Colonic mucosa (tissue), 4 donors: ENCODE measurements at regions of chr9 and their contacts with region 1.

Region 1: GRCh38 chr9:121322037-121322775 is 47.8 kb downstream of the STOM start:
- DNase-seq: no peak
- H3K4me3 ChIP-seq: no peak overlapping the region
- H3K27ac ChIP-seq: peak overlapping the region; percentile 53
- H3K4me1 ChIP-seq: no peaks in the 10 kb centered on the region
- H3K27me3 ChIP-seq: no peaks in the 10 kb centered on the region
- CTCF ChIP-seq: no peak

Region 2: DNA sequence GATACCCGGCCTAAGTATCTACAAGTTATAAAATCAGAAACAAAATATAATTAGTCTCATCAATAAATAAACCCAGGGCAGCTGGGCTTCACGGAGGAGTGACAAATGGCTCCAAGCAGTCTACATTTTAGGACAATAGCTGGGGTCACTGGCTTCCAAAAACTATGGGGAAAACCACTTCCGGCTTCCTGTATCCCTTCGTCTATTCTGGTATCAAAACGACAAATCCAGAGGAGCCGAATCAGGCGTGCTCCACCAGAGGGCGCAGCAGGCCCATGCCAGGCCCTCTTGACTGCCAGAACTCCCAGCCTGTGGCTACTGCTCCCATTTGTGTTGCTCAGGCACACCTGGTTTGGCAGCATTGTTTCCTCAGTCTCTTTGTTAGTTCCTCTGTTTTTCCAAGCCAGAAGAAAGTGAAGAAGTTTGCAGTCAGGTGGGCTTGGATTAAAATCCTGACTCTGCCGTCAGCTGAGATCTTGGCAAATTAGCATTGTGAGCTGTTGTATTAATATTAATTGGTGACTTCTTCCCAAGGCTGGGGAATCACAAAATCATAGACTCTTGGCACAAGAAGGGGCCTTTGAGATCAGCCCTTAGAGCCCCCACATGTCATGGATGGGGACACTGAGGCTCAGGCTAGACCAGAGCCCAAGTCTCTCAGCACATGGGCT is 108.9 kb before region 1 on chr9:
- intact Hi-C with region 1: loop called (anchors 5 kb)
- DNase-seq: peak; percentile 91
- H3K4me3 ChIP-seq: no peak overlapping the region
- H3K27ac ChIP-seq: no peak overlapping the region
- H3K4me1 ChIP-seq: no peaks in the 10 kb centered on the region
- H3K27me3 ChIP-seq: no peaks in the 10 kb centered on the region
- CTCF ChIP-seq: peak; percentile 87

Region 3: DNA sequence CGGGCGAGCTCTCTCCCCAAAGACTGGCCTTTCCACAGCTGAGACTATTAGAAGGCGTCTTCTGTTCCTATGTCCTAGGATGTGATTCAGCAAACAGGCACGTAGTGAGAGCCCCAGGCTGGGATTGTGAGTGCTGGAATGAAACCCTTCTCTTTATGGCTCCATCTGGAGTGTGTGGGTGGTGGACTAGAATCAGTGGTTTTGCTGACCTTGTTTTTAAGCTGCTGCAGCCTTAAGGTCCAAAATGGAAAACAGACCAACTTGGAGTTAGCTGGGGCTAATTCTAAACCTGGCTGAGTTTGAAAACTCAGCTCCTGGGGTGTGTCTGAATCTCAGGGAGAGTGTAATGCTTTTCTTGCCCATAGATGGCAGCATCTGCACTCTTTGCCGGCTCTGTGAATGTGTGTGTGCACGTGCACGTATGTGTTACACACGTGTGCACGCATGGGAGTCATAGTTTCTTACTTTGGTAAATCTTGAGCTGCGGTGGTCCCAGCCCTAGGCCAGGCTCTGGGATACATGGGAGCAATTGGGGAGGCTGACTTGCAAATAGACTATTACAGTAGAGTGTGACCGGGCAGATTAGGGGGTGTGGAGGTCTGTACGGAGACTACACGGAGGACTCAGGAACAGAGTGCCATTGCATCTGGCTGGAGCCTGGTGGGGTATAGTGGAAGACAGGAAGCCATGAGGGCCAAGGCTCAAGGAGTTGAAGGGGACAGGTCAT is 43.5 kb before region 1 on chr9:
- intact Hi-C with region 1: loop called (anchors 5 kb)
- DNase-seq: peak; percentile 83
- H3K4me3 ChIP-seq: no peak overlapping the region
- H3K27ac ChIP-seq: peak overlapping the region; percentile 69
- H3K4me1 ChIP-seq: peaks cover 43% of the 10 kb centered on the region
- H3K27me3 ChIP-seq: no peaks in the 10 kb centered on the region
- CTCF ChIP-seq: peak; percentile 82

Region 4: DNA sequence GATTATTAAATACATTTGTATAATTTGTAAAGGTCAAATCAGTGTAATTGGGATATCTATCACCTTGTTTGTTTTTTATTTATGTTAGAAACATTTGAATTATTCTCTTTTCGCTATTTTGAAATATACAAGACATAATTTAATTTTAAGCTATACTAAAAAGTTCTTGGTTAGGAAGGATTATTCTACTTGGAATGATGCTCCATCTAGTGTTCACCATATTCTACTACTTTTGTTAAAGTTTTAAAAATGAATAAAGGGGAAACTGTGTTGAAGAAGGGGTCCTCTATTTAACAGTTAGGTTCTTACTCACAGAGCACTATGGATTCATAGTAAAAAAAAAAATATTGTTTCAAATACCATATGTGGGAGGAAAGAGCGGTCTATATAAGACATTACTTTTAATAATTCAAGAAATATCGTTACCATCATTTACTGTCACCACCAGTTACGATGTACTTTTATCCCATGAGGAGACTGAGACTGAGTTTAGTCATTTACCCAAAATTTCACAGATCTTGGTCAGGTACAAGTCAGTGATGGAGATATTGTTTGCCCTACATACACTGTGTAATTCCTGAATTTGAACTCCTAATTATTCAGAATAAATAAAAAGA is 54.1 kb after region 1 on chr9:
- intact Hi-C with region 1: loop called (anchors 2 kb)
- DNase-seq: no peak
- H3K4me3 ChIP-seq: no peak overlapping the region
- H3K27ac ChIP-seq: no peak overlapping the region
- H3K4me1 ChIP-seq: peaks cover 17% of the 10 kb centered on the region
- H3K27me3 ChIP-seq: no peaks in the 10 kb centered on the region
- CTCF ChIP-seq: no peak

Region 5: GRCh38 chr9:121399883-121400607 is 77.8 kb after region 1 on chr9:
- intact Hi-C with region 1: loop called (anchors 2 kb)
- DNase-seq: no peak
- H3K4me3 ChIP-seq: no peak overlapping the region
- H3K27ac ChIP-seq: no peak overlapping the region
- H3K4me1 ChIP-seq: no peaks in the 10 kb centered on the region
- H3K27me3 ChIP-seq: no peaks in the 10 kb centered on the region
- CTCF ChIP-seq: peak; percentile 65